ENCODE measurements at regions of chr9 and their contacts with region 1.

Region 1: GRCh38 chr9:123329329-123329955 is 26.6 kb upstream of the CRB2 start:
- DNase-seq: no peak
- ATAC-seq: no peak
- H3K4me3 ChIP-seq: no peak overlapping the region
- H3K27ac ChIP-seq: no peak overlapping the region
- H3K4me1 ChIP-seq: no peaks in the 10 kb centered on the region
- CTCF ChIP-seq: no peak
- EP300 ChIP-seq: no peak
- POLR2A ChIP-seq: no peak
- RAD21 ChIP-seq: no peak

Region 2: DNA sequence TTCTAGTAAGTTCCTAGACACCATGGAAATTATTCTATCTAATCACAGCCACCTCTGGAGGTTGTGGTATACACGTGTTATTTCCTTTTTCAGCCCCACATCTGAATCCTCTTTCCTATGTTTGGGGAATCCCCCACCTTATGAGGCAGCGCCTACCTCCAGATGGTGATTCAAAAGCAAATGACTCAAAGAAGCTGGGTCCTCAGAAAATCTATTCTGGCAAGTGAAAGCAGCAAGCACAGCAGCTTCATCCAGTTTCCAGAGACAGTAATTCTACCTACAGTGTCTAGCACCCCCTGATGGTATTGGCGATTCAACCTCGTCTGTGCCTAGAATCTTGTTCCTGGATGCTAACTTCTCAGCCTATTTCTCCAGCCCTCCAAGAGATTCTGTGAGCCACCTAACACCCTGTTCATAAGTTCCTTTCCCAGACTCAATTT is 104.0 kb before region 1 on chr9:
- CTCF ChIA-PET with region 1: no interaction called
- POLR2A ChIA-PET with region 1: no interaction called
- DNase-seq: peak; percentile 13 to 42
- ATAC-seq: peak; percentile 56 to 72; a peak in 5 of 6 replicates
- H3K4me3 ChIP-seq: no peak overlapping the region
- H3K27ac ChIP-seq: no peak overlapping the region
- H3K4me1 ChIP-seq: no peaks in the 10 kb centered on the region
- CTCF ChIP-seq: peak; percentile 32; the same call in 2 of the 3 replicates
- EP300 ChIP-seq: no peak
- POLR2A ChIP-seq: no peak
- RAD21 ChIP-seq: peak; percentile 23 to 40; a peak in 3 of 5 replicates

Region 3: GRCh38 chr9:123318202-123318601 is 11.2 kb before region 1 on chr9:
- CTCF ChIA-PET with region 1: interaction called, 11 read pairs
- POLR2A ChIA-PET with region 1: no interaction called
- DNase-seq: no peak
- ATAC-seq: no peak; a peak in 1 of 6 replicates
- H3K4me3 ChIP-seq: no peak overlapping the region
- H3K27ac ChIP-seq: no peak overlapping the region
- H3K4me1 ChIP-seq: no peaks in the 10 kb centered on the region
- CTCF ChIP-seq: no peak
- EP300 ChIP-seq: no peak
- POLR2A ChIP-seq: no peak
- RAD21 ChIP-seq: no peak